ENCODE measurements at regions of chr3 and their contacts with region 1.

Region 1: DNA sequence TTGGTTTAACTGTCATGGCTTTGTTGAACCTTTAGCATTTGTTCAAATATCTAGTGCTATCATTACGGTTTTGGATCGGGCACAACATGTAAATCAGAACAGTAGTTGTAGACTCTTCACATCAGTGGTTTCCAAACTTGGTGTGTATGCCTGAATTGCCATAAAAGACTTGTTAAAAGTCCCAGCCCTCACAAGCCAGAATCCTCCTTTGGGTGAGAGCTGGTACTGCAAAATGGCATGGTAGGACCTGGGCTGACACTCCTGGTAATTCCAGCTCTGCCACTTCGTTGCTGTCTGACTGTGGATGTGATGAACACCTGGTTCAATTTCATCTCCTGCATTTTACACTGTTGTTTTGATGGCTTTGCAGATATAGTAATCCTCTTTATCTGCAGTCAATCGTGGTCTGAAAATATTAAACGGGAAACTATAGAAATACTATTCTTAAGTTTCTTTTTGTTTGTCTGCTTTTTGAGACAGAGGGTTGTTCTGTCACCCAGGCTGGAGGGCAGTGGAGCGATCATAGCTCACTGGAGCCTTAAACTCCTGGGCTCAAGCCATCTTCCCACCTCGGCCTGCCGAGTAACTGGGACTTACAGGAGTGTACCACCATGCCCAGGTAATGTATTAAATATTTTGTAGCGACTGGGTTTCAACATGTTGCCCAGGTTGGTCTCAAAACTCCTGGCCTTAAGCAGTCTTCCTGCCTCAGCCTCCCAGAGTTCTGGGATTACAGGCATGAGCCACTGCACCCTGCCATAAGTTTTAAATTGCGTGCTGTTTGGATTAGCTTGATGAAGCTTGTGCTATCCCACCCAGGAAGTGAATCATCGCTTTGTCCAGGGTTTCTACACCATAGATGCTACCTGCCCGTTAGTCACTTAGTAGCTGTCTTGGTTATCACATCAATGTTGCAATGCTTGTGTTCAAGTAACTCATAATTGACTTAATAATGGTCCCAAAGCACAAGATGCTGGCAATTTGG is 61.6 kb downstream of the RAB7A start:
- DNase-seq: peak in 3 of 5 donors; percentile 10 to 50 (median 17)
- H3K4me3 ChIP-seq: peak overlapping the region; percentile 32
- H3K4me3 Mint-ChIP-seq: peak overlapping the region; percentile 57 to 92 (median 77)
- H3K27ac ChIP-seq: no peak overlapping the region
- H3K27ac Mint-ChIP-seq: peak overlapping the region; percentile 68 to 97 (median 90)
- H3K4me1 ChIP-seq: peaks cover 81% of the 10 kb centered on the region
- H3K4me1 Mint-ChIP-seq: peaks cover 70 to 91% (median 85%) of the 10 kb centered on the region in 3 donors
- H3K27me3 ChIP-seq: no peaks in the 10 kb centered on the region
- H3K27me3 Mint-ChIP-seq: no peaks in the 10 kb centered on the region

Region 2: GRCh38 chr3:128634075-128634611 is 153.4 kb before region 1 on chr3:
- CTCF ChIA-PET with region 1: no interaction called
- POLR2A ChIA-PET with region 1: no interaction called
- DNase-seq: no peak
- H3K4me3 ChIP-seq: no peak overlapping the region
- H3K4me3 Mint-ChIP-seq: no peak overlapping the region
- H3K27ac ChIP-seq: no peak overlapping the region
- H3K27ac Mint-ChIP-seq: peak overlapping the region in 1 of 8 donors; percentile 17
- H3K4me1 ChIP-seq: peaks cover 3% of the 10 kb centered on the region
- H3K4me1 Mint-ChIP-seq: peaks cover 18 to 31% (median 27%) of the 10 kb centered on the region in 3 donors
- H3K27me3 ChIP-seq: no peaks in the 10 kb centered on the region
- H3K27me3 Mint-ChIP-seq: no peaks in the 10 kb centered on the region

Region 3: DNA sequence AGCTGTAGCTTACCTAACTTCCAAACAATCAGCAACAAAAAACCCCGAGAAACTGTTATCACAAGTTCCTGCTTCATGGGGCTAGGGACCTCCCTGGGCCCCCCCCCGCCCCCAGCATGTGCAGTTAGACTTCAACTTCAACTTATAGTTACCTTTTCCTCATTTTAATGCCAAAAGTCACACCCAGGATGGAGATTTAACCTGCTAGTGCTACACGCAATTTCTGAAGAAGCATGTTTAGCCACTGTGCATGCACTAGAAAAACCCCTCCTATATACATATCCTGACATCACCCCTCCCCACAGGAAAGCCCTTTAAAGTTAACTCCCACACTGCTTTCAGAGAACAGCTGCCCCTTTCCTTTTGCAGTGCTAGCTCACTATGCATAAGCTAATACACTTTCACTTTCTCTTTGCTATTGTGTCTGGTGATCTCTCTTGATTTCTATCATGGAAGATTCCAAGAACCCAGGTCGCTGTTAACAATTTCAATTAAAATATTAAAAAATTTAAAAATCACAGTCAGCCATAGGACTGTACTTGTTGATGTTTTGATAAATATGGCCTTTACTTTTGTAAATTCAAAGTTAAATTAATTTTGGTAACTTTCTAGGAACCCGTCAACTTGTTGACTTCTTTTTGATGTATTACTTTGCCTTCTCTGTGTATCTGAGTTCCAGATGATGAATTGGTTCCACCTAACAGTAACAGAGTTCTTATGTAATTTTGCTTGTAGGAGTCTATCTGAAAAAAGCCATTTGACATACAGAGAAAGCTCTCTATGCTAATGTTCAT is 16.7 kb after region 1 on chr3:
- CTCF ChIA-PET with region 1: interaction called, 16 read pairs
- POLR2A ChIA-PET with region 1: interaction called, 3 read pairs
- DNase-seq: peak; percentile 22 to 82 (median 64)
- H3K4me3 ChIP-seq: peak overlapping the region; percentile 40
- H3K4me3 Mint-ChIP-seq: peak overlapping the region; percentile 61 to 92 (median 83)
- H3K27ac ChIP-seq: peak overlapping the region; percentile 64
- H3K27ac Mint-ChIP-seq: peak overlapping the region; percentile 86 to 98 (median 92)
- H3K4me1 ChIP-seq: peaks cover 72% of the 10 kb centered on the region
- H3K4me1 Mint-ChIP-seq: peaks cover 58 to 80% (median 74%) of the 10 kb centered on the region in 3 donors
- H3K27me3 ChIP-seq: no peaks in the 10 kb centered on the region
- H3K27me3 Mint-ChIP-seq: no peaks in the 10 kb centered on the region

Region 4: DNA sequence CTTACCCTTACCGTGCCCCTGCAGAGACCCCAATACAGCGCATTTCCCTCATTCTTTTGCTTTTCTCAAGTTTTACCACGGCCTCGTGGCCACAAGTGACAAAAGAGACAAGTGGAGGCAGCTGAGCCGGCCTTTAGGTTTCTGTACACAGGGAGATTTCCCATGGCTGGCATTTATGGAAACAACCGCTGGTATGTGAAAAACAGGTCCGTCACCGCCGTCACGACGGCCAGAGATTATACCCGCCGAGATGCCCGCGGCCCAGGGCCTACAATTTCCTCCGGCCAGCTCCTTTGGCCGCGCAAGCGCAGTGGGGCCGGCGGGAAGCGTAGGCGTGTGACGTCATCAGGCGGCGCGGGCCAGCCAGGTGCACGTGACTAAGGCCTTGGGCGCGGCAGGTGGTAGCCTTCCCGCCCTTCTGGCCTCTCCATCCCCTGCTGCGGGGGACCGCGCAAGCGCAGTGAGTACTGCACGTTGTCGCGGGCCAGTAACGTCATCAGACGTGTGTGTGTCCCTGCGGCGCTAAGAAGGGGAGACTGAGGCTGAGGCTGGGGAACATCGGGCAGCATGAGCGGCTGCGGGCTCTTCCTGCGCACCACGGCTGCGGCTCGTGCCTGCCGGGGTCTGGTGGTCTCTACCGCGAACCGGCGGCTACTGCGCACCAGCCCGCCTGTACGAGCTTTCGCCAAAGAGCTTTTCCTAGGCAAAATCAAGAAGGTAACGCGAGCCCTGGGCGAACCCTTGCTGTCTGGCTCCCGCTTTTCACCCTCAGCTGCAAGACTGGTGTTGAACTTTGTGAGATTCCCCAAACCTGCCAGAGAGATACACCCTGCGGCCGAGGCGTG is 91.8 kb after region 1 on chr3 and contains the start of gene ACAD9:
- CTCF ChIA-PET with region 1: no interaction called
- POLR2A ChIA-PET with region 1: interaction called, 12 read pairs
- DNase-seq: peak; percentile 94 to 99 (median 96)
- H3K4me3 ChIP-seq: peak within 1 kb of the TSS; percentile 84
- H3K4me3 Mint-ChIP-seq: peak within 1 kb of the TSS; percentile 84 to 97 (median 87)
- H3K27ac ChIP-seq: peak within 1 kb of the TSS; percentile 93
- H3K27ac Mint-ChIP-seq: peak within 1 kb of the TSS; percentile 96 to 100 (median 98)
- H3K4me1 ChIP-seq: peaks cover 40% of the 10 kb centered on the region
- H3K4me1 Mint-ChIP-seq: peaks cover 51 to 74% (median 70%) of the 10 kb centered on the region in 3 donors
- H3K27me3 ChIP-seq: no peaks in the 10 kb centered on the region
- H3K27me3 Mint-ChIP-seq: no peaks in the 10 kb centered on the region
- total RNA-seq, gene ACAD9: 50.5 to 51.2 TPM

Measured in CD8-positive, alpha-beta memory T cell (primary cell).